Activated naive CD8-positive, alpha-beta T cell treated with anti-CD3 and anti-CD28 coated beads, Interleukin-2, amount 10 ng/mL, durations not matched to agents 7 days and 5 days (primary cell): ENCODE measurements at regions of chr11 and their contacts with region 1.

Region 1: GRCh38 chr11:65506770-65507505 is 8.1 kb downstream of the MALAT1 start:
- DNase-seq: no peak
- ATAC-seq: peak; percentile 34
- H3K4me3 Mint-ChIP-seq: no peak overlapping the region
- H3K27ac Mint-ChIP-seq: peak overlapping the region; percentile 80
- H3K4me1 Mint-ChIP-seq: peaks cover 44% of the 10 kb centered on the region
- H3K27me3 Mint-ChIP-seq: no peaks in the 10 kb centered on the region

Region 2: GRCh38 chr11:65382033-65382807 is 124.7 kb before region 1 on chr11 and contains the start of gene SLC25A45:
- POLR2A ChIA-PET with region 1: interaction called, 19 read pairs
- DNase-seq: peak; percentile 92
- ATAC-seq: peak; percentile 84
- H3K4me3 Mint-ChIP-seq: peak within 1 kb of the TSS; percentile 89
- H3K27ac Mint-ChIP-seq: peak within 1 kb of the TSS; percentile 96
- H3K4me1 Mint-ChIP-seq: peaks cover 34% of the 10 kb centered on the region
- H3K27me3 Mint-ChIP-seq: no peaks in the 10 kb centered on the region
- total RNA-seq, gene SLC25A45: 25.5 to 29.6 TPM

Region 3: GRCh38 chr11:65487413-65488272 is 19.3 kb before region 1 on chr11:
- POLR2A ChIA-PET with region 1: interaction called, 46 read pairs
- DNase-seq: no peak
- ATAC-seq: peak; percentile 18
- H3K4me3 Mint-ChIP-seq: no peak overlapping the region
- H3K27ac Mint-ChIP-seq: no peak overlapping the region
- H3K4me1 Mint-ChIP-seq: peaks cover 20% of the 10 kb centered on the region
- H3K27me3 Mint-ChIP-seq: peaks cover 6% of the 10 kb centered on the region

Region 4: DNA sequence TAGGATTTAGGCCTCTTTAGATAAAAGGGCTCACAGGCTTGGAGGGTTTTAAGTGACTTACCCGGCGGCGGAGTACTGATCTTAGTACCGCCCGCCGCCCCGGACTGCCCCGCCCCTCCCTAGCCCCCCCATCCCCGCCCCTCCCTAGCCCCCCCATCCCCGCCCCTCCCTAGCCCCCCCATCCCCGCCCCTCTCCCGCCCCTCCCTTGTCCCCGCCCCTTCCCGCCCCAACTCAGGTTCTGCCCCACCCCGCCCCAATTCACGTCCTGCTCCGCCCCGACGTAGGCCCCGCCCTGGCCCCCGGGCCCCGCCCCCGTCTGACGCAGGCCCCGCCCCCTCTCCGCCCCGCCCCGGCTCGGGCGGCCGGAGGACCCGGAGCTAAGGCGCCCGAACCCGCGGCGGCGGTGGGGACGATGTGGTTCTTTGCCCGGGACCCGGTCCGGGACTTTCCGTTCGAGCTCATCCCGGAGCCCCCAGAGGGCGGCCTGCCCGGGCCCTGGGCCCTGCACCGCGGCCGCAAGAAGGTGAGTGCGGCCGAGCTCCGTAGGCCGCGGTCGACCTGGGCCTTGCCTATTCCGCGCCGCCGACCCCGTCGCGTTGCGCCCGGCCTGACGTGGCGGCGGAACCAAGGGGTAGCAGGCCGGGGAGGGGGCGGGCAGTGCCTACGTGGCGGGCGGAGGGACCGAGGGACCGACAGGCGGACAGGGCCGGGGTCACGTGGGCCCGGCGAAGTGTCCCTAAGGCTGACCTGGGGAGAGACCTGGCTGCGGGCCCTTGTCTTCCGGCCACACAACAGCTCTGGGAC is 18.0 kb after region 1 on chr11 and contains the start of gene SCYL1:
- POLR2A ChIA-PET with region 1: interaction called, 14 read pairs
- DNase-seq: peak; percentile 88
- ATAC-seq: peak; percentile 59
- H3K4me3 Mint-ChIP-seq: peak within 1 kb of the TSS; percentile 87
- H3K27ac Mint-ChIP-seq: peak within 1 kb of the TSS; percentile 93
- H3K4me1 Mint-ChIP-seq: peaks cover 42% of the 10 kb centered on the region
- H3K27me3 Mint-ChIP-seq: no peaks in the 10 kb centered on the region
- total RNA-seq, gene SCYL1: 74.2 to 74.9 TPM